HCT116 (cell line): ENCODE measurements at regions of chr4 and their contacts with region 1.

Region 1: DNA sequence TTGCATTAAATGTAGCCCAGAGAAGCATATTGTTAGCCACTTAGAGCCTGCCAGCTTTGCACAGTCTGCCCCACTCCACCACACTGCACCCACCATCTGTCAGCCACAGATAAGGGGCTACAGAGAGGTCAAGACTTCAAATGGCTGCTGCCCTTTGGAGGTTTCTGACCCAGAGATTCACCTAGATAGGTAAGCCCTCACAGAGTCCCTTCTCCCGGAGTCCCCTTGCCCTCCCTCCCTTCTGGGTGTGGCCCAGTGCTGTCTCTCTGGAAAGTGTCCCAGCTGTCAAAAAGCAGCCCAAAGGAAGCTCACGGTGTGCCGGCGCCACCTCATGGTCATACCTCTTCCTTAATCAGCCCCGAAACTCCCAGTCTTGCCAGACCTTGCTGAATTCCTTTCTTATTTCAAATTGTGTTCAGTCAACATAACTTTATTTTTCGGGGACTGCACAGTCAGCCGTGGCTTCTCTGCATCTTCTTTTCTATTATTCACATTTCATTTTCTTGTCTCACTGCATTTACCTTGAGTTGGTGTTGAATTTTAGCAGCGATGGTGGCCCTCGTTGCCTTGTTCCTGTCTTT is 14.1 kb upstream of the GRPEL1 start:
- DNase-seq: peak; percentile 74
- ATAC-seq: peak; percentile 100
- H3K4me3 ChIP-seq: no peak overlapping the region
- H3K27ac ChIP-seq: no peak overlapping the region
- H3K4me1 ChIP-seq: peaks cover 0 to 9% of the 10 kb centered on the region in 2 experiments; a peak in 2 of 4 replicates
- H3K27me3 ChIP-seq: peaks cover 15% of the 10 kb centered on the region; the same call in 1 of the 2 replicates
- CTCF ChIP-seq: peak; percentile 71 to 84 (median 80)
- POLR2A ChIP-seq: no peak
- RAD21 ChIP-seq: peak; percentile 93

Region 2: DNA sequence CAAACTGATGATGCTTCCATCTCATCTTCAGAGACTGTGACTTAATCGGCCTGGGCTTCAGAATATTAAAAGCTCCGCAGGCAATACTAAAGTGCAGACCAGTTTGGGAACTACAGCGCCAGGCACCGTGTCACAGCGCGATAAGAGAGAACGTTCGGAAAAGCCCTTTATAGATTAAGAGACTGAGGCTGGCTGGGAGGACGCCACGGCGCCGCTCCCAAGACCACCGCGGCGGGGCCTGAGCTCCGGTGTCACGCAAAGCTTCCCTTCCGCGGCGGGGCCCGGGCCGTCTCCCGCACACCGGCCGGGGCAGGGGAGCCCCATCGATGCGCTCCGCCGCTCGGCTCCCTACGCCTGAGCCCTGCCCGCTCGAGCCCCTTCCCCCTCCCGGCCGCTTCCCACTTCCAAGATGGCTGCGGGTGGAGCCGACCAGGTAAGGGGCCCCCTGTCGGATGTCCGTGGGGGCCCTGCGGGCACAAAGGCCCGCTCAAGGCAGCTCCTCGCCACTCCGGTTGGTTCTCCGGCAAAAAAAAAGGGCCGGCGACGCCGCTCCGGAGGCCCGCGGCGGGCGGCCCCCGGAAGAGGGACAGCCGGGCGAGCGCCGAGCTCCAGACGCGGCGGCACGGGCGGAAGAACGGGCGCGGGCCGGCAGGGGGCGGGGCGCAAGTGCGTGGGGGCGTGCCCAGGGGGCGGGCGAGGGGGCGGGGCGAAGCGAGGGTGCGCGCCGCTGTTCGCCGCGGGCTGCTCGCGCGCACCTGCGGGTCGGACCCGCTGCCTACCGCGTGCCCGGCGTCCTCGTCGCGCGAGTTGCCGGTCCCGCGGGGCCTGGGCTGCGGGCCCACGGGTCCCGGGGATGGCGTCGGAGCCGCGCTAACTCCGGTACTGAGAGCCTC is 172.7 kb before region 1 on chr4 and contains the start of gene TBC1D14:
- CTCF ChIA-PET with region 1: interaction called, 11 read pairs
- POLR2A ChIA-PET with region 1: no interaction called
- RAD21 ChIA-PET with region 1: interaction called in 1 of 2 experiments, 3 read pairs
- intact Hi-C with region 1: no loop called
- DNase-seq: peak; percentile 68
- ATAC-seq: peak; percentile 87
- H3K4me3 ChIP-seq: peak within 1 kb of the TSS; percentile 72 to 88
- H3K27ac ChIP-seq: peak within 1 kb of the TSS; percentile 95
- H3K4me1 ChIP-seq: peaks cover 11 to 35% of the 10 kb centered on the region in 2 experiments
- H3K27me3 ChIP-seq: no peaks in the 10 kb centered on the region
- CTCF ChIP-seq: peak in 1 of 3 experiments; percentile 20; a peak in 1 of 6 replicates
- POLR2A ChIP-seq: peak; percentile 37
- RAD21 ChIP-seq: no peak
- total RNA-seq, gene TBC1D14: 62.9 TPM

Region 3: GRCh38 chr4:7295911-7296660 is 214.1 kb after region 1 on chr4:
- CTCF ChIA-PET with region 1: no interaction called
- POLR2A ChIA-PET with region 1: no interaction called
- RAD21 ChIA-PET with region 1: no interaction called
- intact Hi-C with region 1: loop called (anchors 10 kb)
- DNase-seq: peak; percentile 10
- ATAC-seq: peak; percentile 77
- H3K4me3 ChIP-seq: no peak overlapping the region
- H3K27ac ChIP-seq: no peak overlapping the region
- H3K4me1 ChIP-seq: no peaks in the 10 kb centered on the region
- H3K27me3 ChIP-seq: no peaks in the 10 kb centered on the region; the same call in 1 of the 2 replicates
- CTCF ChIP-seq: peak; percentile 49 to 81 (median 68); a peak in 5 of 6 replicates
- POLR2A ChIP-seq: no peak
- RAD21 ChIP-seq: peak; percentile 91